ENCODE measurements at regions of chr18 and their contacts with region 1.

Region 1: DNA sequence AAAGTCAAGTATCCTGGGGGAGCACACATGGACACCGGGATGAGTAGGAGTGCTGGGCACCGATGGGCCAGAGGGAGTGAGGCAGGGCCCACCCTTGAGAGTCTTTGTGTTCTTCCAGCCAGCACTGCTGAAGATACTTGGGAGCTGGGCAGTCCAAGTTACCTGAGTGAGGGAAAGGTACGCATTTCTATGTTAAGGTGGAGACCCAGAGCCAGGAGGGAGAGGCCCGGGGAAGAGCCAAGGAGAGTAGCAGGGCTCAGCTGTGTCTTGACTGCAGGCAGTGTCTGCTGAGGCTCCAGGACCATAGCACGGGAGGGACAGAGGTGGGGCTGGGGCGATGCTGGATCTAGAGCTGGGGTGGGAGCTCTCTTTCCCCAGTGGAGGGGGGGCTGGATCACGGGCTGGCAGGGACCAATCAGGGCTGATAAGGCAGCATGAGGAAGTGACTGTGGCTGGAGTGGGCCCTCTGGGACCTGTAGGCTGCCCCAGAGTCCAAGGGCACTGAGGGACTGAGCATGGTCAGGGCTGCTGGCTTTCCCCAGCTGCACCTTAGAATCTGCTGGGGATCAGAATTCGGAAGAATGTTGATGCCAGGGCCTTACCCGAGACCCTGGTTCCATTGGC is 289.2 kb downstream of the PHLPP1 start:
- DNase-seq: no peak
- ATAC-seq: no peak
- H3K4me3 ChIP-seq: no peak overlapping the region
- H3K27ac ChIP-seq: no peak overlapping the region
- H3K4me1 ChIP-seq: no peaks in the 10 kb centered on the region
- H3K27me3 ChIP-seq: peaks cover 10% of the 10 kb centered on the region; the same call in 1 of the 2 replicates
- CTCF ChIP-seq: no peak
- POLR2A ChIP-seq: no peak
- RAD21 ChIP-seq: no peak

Region 2: GRCh38 chr18:62596145-62597005 is 408.2 kb before region 1 on chr18:
- CTCF ChIA-PET with region 1: no interaction called
- POLR2A ChIA-PET with region 1: no interaction called
- dilution Hi-C with region 1: no loop called
- in situ Hi-C with region 1: loop called (anchors 5 kb)
- intact Hi-C with region 1: no loop called
- DNase-seq: no peak
- ATAC-seq: peak; percentile 59
- H3K4me3 ChIP-seq: no peak overlapping the region; the same call in 1 of the 2 replicates
- H3K27ac ChIP-seq: no peak overlapping the region
- H3K4me1 ChIP-seq: no peaks in the 10 kb centered on the region; the same call in 1 of the 2 replicates
- H3K27me3 ChIP-seq: peaks cover 47% of the 10 kb centered on the region
- CTCF ChIP-seq: no peak
- POLR2A ChIP-seq: no peak
- RAD21 ChIP-seq: no peak

Region 3: GRCh38 chr18:62973689-62974088 is 30.9 kb before region 1 on chr18:
- CTCF ChIA-PET with region 1: no interaction called
- POLR2A ChIA-PET with region 1: no interaction called
- dilution Hi-C with region 1: no loop called
- in situ Hi-C with region 1: no loop called
- intact Hi-C with region 1: no loop called
- DNase-seq: no peak
- ATAC-seq: no peak
- H3K4me3 ChIP-seq: no peak overlapping the region
- H3K27ac ChIP-seq: no peak overlapping the region
- H3K4me1 ChIP-seq: no peaks in the 10 kb centered on the region
- H3K27me3 ChIP-seq: no peaks in the 10 kb centered on the region; the same call in 1 of the 2 replicates
- CTCF ChIP-seq: no peak
- POLR2A ChIP-seq: no peak
- RAD21 ChIP-seq: no peak

Measured in IMR-90 (cell line).